ENCODE measurements at regions of chr11 and their contacts with region 1.

Region 1: DNA sequence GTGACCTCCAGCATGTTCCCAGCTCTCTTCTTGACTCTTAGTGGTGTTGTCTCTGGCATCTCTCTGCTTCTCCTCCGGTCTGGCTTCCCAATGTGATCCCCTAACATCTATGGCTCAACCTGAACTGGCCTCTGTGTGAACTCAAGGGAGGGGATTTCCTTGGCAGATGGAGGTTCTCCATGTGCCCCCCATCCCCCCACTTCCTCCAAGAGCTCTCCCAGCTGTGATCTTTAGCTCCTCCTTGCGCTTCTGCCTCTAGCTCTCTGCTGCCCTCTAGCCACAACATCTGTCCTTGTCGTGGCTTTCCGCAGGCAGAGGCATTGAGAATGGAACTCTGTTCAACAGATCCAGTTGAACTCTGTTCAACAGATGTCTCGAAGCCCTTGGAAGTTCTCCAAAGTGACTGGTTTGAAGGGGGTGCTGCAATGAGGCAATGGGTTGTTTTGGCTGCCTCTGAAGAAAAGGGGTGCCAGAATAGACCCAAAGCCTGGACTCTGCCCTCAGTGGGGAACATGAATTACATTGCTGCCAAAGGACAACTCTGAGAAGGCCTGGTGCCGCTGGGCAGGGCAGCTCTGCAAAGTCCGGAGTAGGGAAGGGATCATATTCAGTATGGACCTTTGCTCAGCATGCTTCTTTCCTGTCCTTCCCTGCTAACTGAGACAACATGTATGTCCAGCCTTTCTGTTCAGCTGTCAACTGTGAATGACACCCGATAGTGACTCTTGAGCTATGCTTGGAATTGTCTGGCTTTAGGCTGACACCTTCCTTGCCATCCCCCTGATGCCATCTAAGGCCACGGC is 61.9 kb downstream of the ADM start:
- ATAC-seq: peak in 5 of 8 experiments; percentile 14 to 99 (median 94)
- H3K4me3 ChIP-seq: no peak overlapping the region
- H3K27ac ChIP-seq: no peak overlapping the region
- H3K4me1 ChIP-seq: no peaks in the 10 kb centered on the region

Region 2: GRCh38 chr11:10221342-10221741 is 145.4 kb before region 1 on chr11:
- in situ Hi-C with region 1: no loop called
- ATAC-seq: no peak
- H3K4me3 ChIP-seq: no peak overlapping the region
- H3K27ac ChIP-seq: no peak overlapping the region
- H3K4me1 ChIP-seq: no peaks in the 10 kb centered on the region

Region 3: DNA sequence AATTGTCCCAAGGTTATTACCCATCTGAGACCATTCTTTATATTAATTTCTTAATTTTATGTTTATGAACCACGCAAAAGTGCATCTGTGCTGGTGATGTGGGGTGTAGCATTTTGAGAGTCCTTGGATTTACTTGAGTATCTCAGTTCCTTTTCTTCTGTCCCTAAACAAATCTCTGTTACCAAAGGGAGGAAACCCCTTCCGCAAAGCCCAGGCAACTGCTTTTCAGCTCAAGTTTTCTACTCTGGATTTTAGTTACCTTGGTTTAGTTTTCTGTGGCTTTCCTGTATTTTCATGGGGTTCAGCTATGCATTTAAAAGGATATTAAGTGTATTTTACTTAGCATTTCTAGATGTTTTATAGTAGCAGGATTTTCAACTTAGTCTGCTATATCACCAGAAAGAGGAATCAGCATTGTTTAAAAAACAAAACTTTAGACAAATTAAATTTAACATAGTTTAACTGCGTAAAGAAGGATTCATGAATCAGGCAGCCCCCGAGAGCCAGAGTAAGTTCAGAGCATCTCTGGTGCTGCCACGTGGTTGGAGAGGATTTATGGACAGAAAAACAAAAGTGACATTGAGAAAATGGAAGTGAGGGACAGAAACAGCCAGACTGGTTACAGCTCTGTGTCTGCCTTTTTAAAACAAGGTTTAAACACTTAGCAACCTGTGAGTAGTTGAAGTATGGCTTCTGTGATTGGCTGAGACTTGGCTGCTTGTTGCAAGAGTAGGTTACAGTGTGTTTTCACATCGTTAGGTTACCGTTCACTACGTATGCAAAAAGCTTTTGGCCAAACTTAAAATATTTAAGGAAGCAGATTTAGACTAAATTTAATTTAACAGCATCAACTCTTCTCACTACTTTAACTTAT is 52.3 kb before region 1 on chr11:
- in situ Hi-C with region 1: loop called in 1 of 9 experiments (anchors 10 kb)
- ATAC-seq: peak in 7 of 8 experiments; percentile 13 to 83 (median 46)
- H3K4me3 ChIP-seq: no peak overlapping the region
- H3K27ac ChIP-seq: no peak overlapping the region
- H3K4me1 ChIP-seq: peaks cover 12 to 18% of the 10 kb centered on the region in 2 donors

Measured in motor neuron (in vitro differentiated cells).